Activated naive CD8-positive, alpha-beta T cell treated with anti-CD3 and anti-CD28 coated beads, Interleukin-2, amount 10 ng/mL, durations not matched to agents 7 days and 5 days (primary cell): ENCODE measurements at regions of chr1 and their contacts with region 1.

Region 1: GRCh38 chr1:204565617-204566582 is 49.7 kb downstream of the MDM4 start:
- DNase-seq: no peak
- ATAC-seq: peak; percentile 79
- H3K4me3 Mint-ChIP-seq: peak overlapping the region; percentile 7
- H3K27ac Mint-ChIP-seq: peak overlapping the region; percentile 81
- H3K4me1 Mint-ChIP-seq: peaks cover 42% of the 10 kb centered on the region
- H3K27me3 Mint-ChIP-seq: no peaks in the 10 kb centered on the region

Region 2: GRCh38 chr1:204763706-204764427 is 198.0 kb after region 1 on chr1:
- POLR2A ChIA-PET with region 1: interaction called, 13 read pairs
- DNase-seq: peak; percentile 84
- ATAC-seq: peak; percentile 93
- H3K4me3 Mint-ChIP-seq: peak overlapping the region; percentile 66
- H3K27ac Mint-ChIP-seq: peak overlapping the region; percentile 49
- H3K4me1 Mint-ChIP-seq: peaks cover 8% of the 10 kb centered on the region
- H3K27me3 Mint-ChIP-seq: peaks cover 25% of the 10 kb centered on the region

Region 3: DNA sequence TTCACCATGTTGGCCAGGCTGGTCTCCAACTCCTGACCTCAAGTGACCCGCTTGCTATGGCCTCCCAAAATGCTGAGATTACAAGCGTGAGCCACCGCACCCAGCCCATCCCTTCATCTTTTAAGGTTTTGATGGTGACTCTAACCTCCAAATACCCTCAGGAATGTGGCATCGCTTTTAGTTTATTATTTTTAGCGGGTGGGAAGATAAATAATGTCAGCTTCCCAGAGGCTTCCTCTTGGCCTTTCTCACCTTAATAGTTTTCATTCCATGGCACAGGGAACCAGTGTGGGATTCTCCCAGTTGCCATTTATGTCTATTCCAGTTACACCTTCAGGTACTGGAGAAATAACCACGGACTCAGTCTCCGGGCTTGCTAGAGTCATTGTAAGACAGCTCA is 211.7 kb after region 1 on chr1:
- POLR2A ChIA-PET with region 1: no interaction called
- DNase-seq: no peak
- ATAC-seq: no peak
- H3K4me3 Mint-ChIP-seq: no peak overlapping the region
- H3K27ac Mint-ChIP-seq: no peak overlapping the region
- H3K4me1 Mint-ChIP-seq: no peaks in the 10 kb centered on the region
- H3K27me3 Mint-ChIP-seq: peaks cover 34% of the 10 kb centered on the region